Activated CD8-positive, alpha-beta memory T cell treated with anti-CD3 and anti-CD28 coated beads, Interleukin-2, amount 10 ng/mL, durations not matched to agents 7 days and 5 days (primary cell): ENCODE measurements at regions of chr10 and their contacts with region 1.

Region 1: GRCh38 chr10:8404391-8405120 is 350.1 kb downstream of the GATA3 start:
- DNase-seq: peak; percentile 82
- ATAC-seq: peak; percentile 54
- H3K4me3 Mint-ChIP-seq: peak overlapping the region; percentile 70
- H3K27ac Mint-ChIP-seq: peak overlapping the region; percentile 92
- H3K4me1 Mint-ChIP-seq: peaks cover 78% of the 10 kb centered on the region
- H3K27me3 Mint-ChIP-seq: no peaks in the 10 kb centered on the region

Region 2: DNA sequence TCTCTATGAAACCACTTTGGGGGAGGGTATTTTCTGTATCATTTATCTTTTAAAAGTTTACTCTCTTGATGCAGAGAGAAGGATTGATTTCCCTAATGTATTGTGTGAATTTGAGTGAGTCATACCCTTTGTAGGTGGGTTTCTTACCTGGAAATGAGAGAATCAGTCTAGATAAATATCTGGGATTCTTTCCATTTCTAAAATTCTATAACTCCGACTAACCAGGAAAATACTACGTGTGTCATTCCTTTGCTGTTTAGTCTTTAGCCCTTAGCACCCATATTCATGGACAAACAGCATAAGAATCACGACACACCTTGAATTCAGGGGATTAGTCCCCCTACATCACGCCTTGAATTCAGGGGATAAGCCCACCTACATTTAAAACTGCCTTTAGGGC is 211.0 kb before region 1 on chr10:
- CTCF ChIA-PET with region 1: no interaction called
- DNase-seq: no peak
- ATAC-seq: no peak
- H3K4me3 Mint-ChIP-seq: no peak overlapping the region
- H3K27ac Mint-ChIP-seq: no peak overlapping the region
- H3K4me1 Mint-ChIP-seq: peaks cover 5% of the 10 kb centered on the region
- H3K27me3 Mint-ChIP-seq: peaks cover 5% of the 10 kb centered on the region

Region 3: GRCh38 chr10:8416192-8416701 is 11.7 kb after region 1 on chr10:
- CTCF ChIA-PET with region 1: interaction called, 25 read pairs
- DNase-seq: peak; percentile 69
- ATAC-seq: peak; percentile 90
- H3K4me3 Mint-ChIP-seq: peak overlapping the region; percentile 8
- H3K27ac Mint-ChIP-seq: peak overlapping the region; percentile 89
- H3K4me1 Mint-ChIP-seq: peaks cover 48% of the 10 kb centered on the region
- H3K27me3 Mint-ChIP-seq: no peaks in the 10 kb centered on the region

Region 4: GRCh38 chr10:8543361-8544069 is 139.0 kb after region 1 on chr10:
- CTCF ChIA-PET with region 1: no interaction called
- DNase-seq: no peak
- ATAC-seq: no peak
- H3K4me3 Mint-ChIP-seq: no peak overlapping the region
- H3K27ac Mint-ChIP-seq: no peak overlapping the region
- H3K4me1 Mint-ChIP-seq: no peaks in the 10 kb centered on the region
- H3K27me3 Mint-ChIP-seq: peaks cover 5% of the 10 kb centered on the region